ENCODE measurements at regions of chr7 and their contacts with region 1.

Region 1: DNA sequence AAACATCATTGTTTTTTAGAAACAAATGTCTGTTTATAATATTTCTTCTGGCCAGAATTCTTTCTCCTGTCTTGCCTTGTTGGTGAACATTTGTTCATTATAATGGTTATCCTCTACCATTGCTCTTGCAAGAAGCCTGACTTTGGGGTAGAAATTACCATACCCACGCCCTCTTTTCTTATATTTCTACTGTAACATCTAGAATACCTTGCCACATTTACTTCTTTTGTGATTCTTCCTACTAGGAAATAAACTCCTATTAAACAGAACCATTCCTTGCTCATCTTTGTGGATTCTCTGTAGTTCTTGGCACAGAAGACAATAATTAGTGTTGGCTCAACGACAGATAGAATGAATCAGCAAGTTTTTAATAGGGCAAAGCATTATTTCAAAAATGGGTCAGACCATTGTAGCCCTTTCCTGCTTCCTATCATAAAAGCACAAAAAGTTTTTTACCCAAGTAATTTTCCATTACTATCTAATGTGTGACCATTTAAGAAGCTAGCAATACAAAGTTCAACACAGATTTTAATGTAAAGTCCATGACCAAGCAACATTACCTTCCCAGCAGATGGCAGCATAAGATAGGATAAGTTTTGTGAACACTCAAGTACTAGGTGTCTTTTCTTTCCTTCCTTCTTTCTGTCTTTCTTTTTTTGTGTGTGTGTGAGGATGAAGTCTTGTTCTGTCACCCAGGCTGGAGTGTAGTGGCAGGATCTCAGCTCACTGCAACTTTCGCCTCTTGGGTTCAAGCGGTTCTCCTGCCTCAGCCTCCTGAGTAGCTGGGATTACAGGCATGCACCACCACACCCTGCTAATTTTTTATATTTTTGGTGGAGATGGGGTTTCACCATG is 270.4 kb downstream of the HGF start:
- DNase-seq: no peak
- H3K4me3 ChIP-seq: no peak overlapping the region
- H3K27ac ChIP-seq: peak overlapping the region; percentile 64 to 75 (median 70)
- H3K4me1 ChIP-seq: peaks cover 14 to 28% (median 26%) of the 10 kb centered on the region in 4 donors
- H3K27me3 ChIP-seq: no peaks in the 10 kb centered on the region
- CTCF ChIP-seq: peak; percentile 66 to 75 (median 73)
- EP300 ChIP-seq: no peak
- POLR2A ChIP-seq: no peak

Region 2: GRCh38 chr7:81410471-81411125 is 88.9 kb before region 1 on chr7:
- intact Hi-C with region 1: no loop called
- DNase-seq: no peak
- H3K4me3 ChIP-seq: no peak overlapping the region
- H3K27ac ChIP-seq: no peak overlapping the region
- H3K4me1 ChIP-seq: no peaks in the 10 kb centered on the region
- H3K27me3 ChIP-seq: no peaks in the 10 kb centered on the region
- CTCF ChIP-seq: no peak
- EP300 ChIP-seq: no peak
- POLR2A ChIP-seq: no peak

Region 3: DNA sequence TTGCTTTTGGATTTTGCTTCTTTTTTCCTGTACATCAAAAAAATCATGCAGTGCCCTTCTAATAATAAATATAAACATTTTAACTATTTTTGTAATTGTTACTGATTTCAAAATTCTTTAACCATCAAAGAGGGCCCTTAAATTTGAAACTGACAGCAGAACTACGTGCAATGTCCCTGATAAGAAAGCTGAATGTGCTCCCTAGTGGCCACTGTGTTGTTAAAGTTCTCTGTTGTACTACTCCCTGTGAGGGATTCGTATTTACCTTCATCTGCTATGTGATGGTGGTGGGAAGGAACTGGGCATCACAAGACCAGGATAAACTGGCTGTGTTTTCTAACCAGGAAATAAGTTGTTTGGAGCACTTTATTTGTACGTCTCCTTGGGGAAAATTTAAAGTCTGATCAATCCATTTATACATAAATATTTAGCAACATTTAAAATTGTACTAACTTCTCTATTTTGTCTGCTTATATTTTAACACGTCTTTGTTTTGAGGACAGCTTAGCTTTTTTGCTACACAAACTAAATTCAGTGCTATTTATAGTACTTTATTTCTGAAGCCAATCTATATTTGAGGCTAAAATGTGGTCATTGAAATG is 52.0 kb before region 1 on chr7:
- intact Hi-C with region 1: no loop called
- DNase-seq: no peak
- H3K4me3 ChIP-seq: no peak overlapping the region
- H3K27ac ChIP-seq: no peak overlapping the region
- H3K4me1 ChIP-seq: no peaks in the 10 kb centered on the region
- H3K27me3 ChIP-seq: no peaks in the 10 kb centered on the region
- CTCF ChIP-seq: peak; percentile 30 to 37 (median 36)
- EP300 ChIP-seq: no peak
- POLR2A ChIP-seq: no peak

Region 4: DNA sequence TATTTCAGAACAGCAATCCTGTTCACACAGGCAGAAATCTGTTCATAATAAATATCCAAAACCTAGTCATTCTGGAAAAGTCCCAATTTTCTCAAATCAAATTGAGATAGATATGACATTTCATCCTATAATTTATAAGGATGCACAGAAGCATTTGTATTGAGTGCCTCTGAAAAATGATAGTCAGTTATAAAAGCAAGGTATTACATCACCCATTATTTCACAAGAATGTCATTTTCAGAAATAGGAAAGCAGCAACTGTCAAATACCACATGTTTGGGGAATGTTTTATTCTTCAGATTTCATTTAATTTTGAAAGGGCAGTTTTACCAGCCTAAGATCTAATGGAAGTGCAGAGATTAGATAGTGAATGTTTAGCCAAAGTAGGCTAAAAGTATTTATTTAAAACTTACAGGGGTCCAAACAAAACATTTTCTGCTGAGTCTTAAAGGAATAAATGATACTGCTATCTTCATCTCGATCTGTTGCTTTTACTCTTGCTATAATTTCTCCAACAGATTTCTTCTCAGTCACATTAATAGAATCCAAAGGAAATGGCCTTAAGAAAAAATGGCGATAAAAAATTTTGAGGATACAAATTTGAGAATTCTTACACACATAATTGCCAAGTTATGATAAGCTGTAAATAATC is 84.5 kb after region 1 on chr7:
- intact Hi-C with region 1: no loop called
- DNase-seq: no peak
- H3K4me3 ChIP-seq: no peak overlapping the region
- H3K27ac ChIP-seq: no peak overlapping the region
- H3K4me1 ChIP-seq: no peaks in the 10 kb centered on the region
- H3K27me3 ChIP-seq: no peaks in the 10 kb centered on the region
- CTCF ChIP-seq: no peak
- EP300 ChIP-seq: no peak
- POLR2A ChIP-seq: no peak

Region 5: GRCh38 chr7:81715984-81716588 is 216.6 kb after region 1 on chr7:
- intact Hi-C with region 1: loop called (anchors 10 kb)
- DNase-seq: no peak
- H3K4me3 ChIP-seq: no peak overlapping the region
- H3K27ac ChIP-seq: no peak overlapping the region
- H3K4me1 ChIP-seq: peaks cover 0 to 12% (median 3%) of the 10 kb centered on the region in 4 donors
- H3K27me3 ChIP-seq: no peaks in the 10 kb centered on the region
- CTCF ChIP-seq: peak in 1 of 3 experiments; percentile 20
- EP300 ChIP-seq: no peak
- POLR2A ChIP-seq: no peak

Region 6: DNA sequence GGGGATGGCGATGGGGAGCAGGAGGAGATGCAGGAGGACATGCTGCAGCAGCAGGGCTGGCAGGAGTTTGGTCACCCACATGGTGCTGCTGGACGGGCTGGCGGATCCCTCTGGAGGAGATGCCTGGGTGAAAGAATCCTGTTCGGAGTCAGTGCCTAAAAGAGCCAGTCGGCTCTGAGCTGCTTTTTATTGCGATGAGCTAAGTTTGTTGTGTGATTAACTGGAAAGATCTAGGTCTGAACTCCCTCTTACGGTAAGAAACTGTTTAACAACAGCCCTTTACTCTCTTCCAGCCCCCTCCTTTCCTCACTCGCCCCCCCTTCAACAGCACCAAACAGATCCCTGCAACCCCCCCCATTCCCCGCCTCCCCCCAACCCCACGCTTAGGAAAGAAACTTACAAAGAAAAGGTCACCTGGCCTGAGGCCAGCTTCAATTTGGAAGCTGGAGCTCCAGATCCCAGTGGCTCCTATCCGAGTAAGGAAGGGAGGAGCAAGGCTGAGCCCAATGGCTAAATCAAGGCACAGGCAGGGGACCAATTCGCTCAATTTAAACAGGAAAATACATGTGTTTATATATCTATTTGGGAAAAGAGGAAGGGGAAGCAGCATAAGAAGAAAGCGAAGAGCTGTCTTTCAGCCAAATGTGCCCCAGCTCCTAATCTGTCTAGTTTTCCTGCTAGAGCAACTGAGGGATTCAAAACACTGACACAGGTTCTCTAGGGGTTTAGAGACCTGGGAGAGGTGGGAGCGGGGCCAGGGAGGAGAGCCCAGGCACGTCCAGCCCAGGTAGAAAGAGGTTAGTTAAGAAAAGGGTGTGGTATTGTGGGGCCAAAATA is 270.6 kb after region 1 on chr7 and contains the start of gene HGF:
- intact Hi-C with region 1: loop called (anchors 10 kb)
- DNase-seq: peak; percentile 93
- H3K4me3 ChIP-seq: peak within 1 kb of the TSS; percentile 42 to 58 (median 50)
- H3K27ac ChIP-seq: peak within 1 kb of the TSS; percentile 69 to 79 (median 75)
- H3K4me1 ChIP-seq: peaks cover 3 to 52% (median 40%) of the 10 kb centered on the region in 4 donors
- H3K27me3 ChIP-seq: no peaks in the 10 kb centered on the region
- CTCF ChIP-seq: peak; percentile 13 to 32 (median 18)
- EP300 ChIP-seq: no peak
- POLR2A ChIP-seq: no peak
- total RNA-seq, gene HGF: 5.0 to 13.4 (median 5.6) TPM

Region 7: GRCh38 chr7:81956520-81956919 is 457.0 kb after region 1 on chr7:
- intact Hi-C with region 1: loop called (anchors 5 kb)
- DNase-seq: no peak
- H3K4me3 ChIP-seq: no peak overlapping the region
- H3K27ac ChIP-seq: no peak overlapping the region
- H3K4me1 ChIP-seq: no peaks in the 10 kb centered on the region
- H3K27me3 ChIP-seq: no peaks in the 10 kb centered on the region
- CTCF ChIP-seq: peak in 2 of 3 experiments; percentile 25 to 33
- EP300 ChIP-seq: no peak
- POLR2A ChIP-seq: no peak

Region 8: DNA sequence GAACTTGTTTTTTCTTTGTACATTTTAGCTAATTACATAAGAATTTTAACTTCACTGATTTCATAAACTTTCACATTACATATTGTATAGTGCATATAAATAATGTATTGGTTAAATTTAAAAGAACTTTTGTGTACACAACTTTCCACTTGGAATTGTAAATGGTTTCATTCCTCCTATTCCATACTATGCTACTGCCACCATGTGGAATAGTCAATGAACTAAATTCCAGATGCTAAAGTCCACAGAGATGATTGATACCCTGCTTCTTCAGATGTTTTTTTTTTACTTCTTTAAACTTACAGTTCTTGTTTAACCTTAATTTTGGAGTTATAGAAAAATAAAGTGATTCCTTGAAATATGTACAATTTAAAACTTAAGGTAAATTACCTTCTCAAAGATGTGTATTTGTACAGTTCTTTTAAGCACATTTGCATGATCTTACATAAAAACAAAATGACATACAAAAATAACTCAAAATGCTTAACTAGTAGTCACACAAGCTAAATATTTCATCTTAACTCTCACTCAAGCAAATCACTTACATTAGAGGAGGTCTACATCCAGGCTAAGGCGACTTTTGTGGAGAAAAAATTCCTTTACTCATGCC is 518.0 kb after region 1 on chr7:
- intact Hi-C with region 1: loop called (anchors 10 kb)
- DNase-seq: no peak
- H3K4me3 ChIP-seq: no peak overlapping the region
- H3K27ac ChIP-seq: no peak overlapping the region
- H3K4me1 ChIP-seq: peaks cover 0 to 21% (median 7%) of the 10 kb centered on the region in 4 donors
- H3K27me3 ChIP-seq: no peaks in the 10 kb centered on the region
- CTCF ChIP-seq: peak; percentile 36 to 46 (median 36)
- EP300 ChIP-seq: no peak
- POLR2A ChIP-seq: no peak

Measured in esophagus muscularis mucosa (tissue), 4 donors.